ENCODE measurements at regions of chr16 and their contacts with region 1.

Region 1: DNA sequence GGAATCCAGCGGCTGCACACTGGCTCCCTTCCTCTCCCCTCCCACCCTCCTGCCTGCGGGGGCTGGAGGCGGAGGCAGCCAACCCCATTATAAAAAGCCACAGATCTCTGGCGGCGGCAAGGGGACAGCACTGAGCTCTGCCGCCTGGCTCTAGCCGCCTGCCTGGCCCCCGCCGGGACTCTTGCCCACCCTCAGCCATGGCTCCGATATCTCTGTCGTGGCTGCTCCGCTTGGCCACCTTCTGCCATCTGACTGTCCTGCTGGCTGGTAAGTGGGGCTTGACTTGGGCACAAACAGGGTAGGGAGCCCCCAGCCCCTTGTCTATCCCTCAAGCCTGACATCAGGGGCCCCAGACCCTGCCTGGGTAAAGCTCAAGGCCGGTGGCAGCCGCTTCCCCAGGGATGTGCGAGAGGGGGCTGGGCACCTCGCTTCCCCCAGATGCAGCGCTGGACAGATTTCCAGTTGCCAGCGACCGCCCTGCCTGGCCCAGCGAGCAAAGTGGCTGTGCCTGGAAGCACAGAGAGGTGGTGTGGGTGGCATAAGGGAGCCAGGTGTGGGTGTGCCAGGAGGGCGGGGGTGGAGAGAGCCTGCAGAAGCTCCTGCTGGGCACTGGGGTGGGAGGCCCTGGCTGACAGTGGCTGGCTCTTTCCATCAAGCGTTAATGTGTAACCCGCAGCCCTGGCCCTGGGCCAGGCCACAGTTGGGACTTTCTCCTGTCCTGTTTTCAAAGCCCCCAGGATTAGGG is at the start of gene CX3CL1:
- DNase-seq: peak in 1 of 2 experiments; percentile 77
- H3K4me3 ChIP-seq: peak within 1 kb of the TSS in 3 of 4 experiments; percentile 24 to 51 (median 34); a peak in 6 of 8 replicates
- H3K27ac ChIP-seq: no peak within 1 kb of the TSS
- H3K4me1 ChIP-seq: peaks cover 0 to 22% (median 19%) of the 10 kb centered on the region in 4 experiments; a peak in 6 of 7 replicates
- H3K27me3 ChIP-seq: no peaks in the 10 kb centered on the region
- CTCF ChIP-seq: peak; percentile 4 to 25 (median 14); a peak in 3 of 4 replicates
- EP300 ChIP-seq: no peak
- POLR2A ChIP-seq: peak in 1 of 2 experiments; percentile 42; a peak in 1 of 3 replicates
- RAD21 ChIP-seq: peak in 1 of 2 experiments; percentile 22; a peak in 1 of 4 replicates
- total RNA-seq, gene CX3CL1: 1.4 and 1.9 TPM in 2 replicates

Region 2: DNA sequence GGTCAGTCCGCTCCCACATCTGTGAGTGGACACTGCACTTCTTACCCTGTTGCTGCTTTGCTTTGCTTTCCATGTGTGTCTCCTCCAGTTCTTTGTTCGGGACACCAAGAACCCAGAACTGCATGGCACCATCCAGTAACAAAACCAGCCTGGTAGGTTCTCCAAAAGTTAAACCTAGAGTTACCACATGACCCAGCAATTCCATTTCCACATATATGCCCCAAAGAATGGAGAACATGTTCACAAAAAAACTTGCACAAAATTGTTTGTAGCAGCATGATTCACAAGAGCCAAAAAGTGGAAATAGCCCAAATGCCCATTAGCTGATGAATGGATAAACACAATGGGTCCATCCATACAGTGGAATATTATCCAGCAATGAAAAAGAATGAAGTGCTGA is 24.2 kb before region 1 on chr16:
- CTCF ChIA-PET with region 1: no interaction called
- POLR2A ChIA-PET with region 1: no interaction called
- DNase-seq: no peak
- H3K4me3 ChIP-seq: no peak overlapping the region
- H3K27ac ChIP-seq: no peak overlapping the region
- H3K4me1 ChIP-seq: no peaks in the 10 kb centered on the region
- H3K27me3 ChIP-seq: peaks cover 0 to 2% (median 0%) of the 10 kb centered on the region in 4 experiments; a peak in 1 of 7 replicates
- CTCF ChIP-seq: no peak
- EP300 ChIP-seq: no peak
- POLR2A ChIP-seq: no peak
- RAD21 ChIP-seq: no peak

Region 3: DNA sequence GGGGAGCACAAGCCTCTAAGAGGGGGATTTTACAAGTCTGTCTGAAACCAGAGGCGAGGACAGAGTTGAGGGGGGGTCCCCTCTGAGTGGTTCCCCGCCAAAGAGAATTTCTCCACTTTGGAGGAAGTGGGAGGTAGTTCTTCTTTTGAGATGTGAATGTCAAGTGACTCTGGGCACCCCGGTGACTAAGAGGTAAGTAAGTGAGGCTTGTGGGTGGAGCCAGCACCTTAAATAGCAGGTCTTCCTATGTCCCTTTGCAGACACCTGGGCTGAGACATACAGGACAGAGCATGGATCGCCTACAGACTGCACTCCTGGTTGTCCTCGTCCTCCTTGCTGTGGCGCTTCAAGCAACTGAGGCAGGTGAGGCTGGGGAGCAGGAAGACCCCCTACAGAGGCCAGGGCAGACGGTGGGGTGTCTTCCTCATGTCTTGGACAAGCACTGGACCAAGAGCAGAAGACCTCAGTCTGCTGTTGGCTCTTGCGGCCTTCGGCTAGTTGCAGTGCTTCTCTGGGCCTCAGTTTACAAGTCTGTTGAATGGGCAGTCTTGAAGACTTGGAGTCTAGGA is 13.9 kb before region 1 on chr16 and contains the start of gene CCL22:
- CTCF ChIA-PET with region 1: interaction called, 11 read pairs
- POLR2A ChIA-PET with region 1: interaction called, 3 read pairs
- DNase-seq: no peak
- H3K4me3 ChIP-seq: no peak within 1 kb of the TSS
- H3K27ac ChIP-seq: no peak within 1 kb of the TSS
- H3K4me1 ChIP-seq: peaks cover 0 to 2% (median 0%) of the 10 kb centered on the region in 4 experiments; a peak in 2 of 7 replicates
- H3K27me3 ChIP-seq: peaks cover 0 to under 1% (median 0%) of the 10 kb centered on the region in 4 experiments; a peak in 1 of 7 replicates
- CTCF ChIP-seq: no peak
- EP300 ChIP-seq: no peak
- POLR2A ChIP-seq: no peak
- RAD21 ChIP-seq: no peak
- total RNA-seq, gene CCL22: not detected in 2 replicates

Region 4: GRCh38 chr16:57383276-57384247 is 11.0 kb after region 1 on chr16:
- CTCF ChIA-PET with region 1: interaction called, 15 read pairs
- POLR2A ChIA-PET with region 1: interaction called, 5 read pairs
- DNase-seq: no peak
- H3K4me3 ChIP-seq: no peak overlapping the region
- H3K27ac ChIP-seq: no peak overlapping the region
- H3K4me1 ChIP-seq: peaks cover 0 to 2% (median 1%) of the 10 kb centered on the region in 4 experiments; a peak in 1 of 7 replicates
- H3K27me3 ChIP-seq: no peaks in the 10 kb centered on the region
- CTCF ChIP-seq: no peak
- EP300 ChIP-seq: no peak
- POLR2A ChIP-seq: no peak
- RAD21 ChIP-seq: no peak

Measured in H1 (cell line).